Activated CD4-positive, alpha-beta T cell treated with anti-CD3 and anti-CD28 coated beads, Interleukin-2, amount 10 ng/mL, durations not matched to agents 24 days and 14 days (primary cell): ENCODE measurements at regions of chr1 and their contacts with region 1.

Region 1: DNA sequence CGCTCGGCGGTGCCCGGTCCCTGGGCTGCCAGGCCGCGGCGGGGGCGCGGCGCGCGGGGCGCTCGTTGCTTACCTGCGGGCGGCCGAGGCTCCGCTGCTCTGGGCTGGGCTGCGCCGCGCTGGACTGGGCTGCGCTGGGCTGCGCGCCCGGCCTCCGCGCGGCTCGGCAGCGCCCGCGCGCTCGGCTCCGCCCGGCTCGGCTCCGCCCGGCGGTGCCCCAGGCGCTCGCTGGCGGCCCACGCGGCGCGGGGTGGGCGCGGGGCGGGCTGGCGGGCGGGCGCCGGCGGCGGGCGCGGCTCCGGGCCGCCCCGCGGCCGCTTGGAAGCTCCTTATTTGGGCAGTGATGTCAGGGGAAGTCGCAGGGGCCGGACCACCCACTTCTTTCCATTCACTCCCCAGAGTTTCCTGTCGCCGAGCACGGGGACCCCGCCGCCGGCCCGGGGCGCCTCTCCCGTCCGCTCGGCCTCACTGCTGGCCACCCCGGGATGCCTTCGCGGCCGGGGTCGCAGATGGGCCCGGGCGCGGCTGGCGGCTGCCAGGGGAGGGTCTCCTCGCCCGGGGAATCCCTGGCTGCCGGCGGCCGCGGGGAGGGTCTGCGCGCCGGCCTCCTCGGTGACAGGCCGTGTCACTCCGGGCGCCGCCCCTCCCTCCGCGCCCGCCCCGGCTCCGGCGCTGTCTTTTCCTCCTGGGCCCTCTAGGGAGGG is 177.7 kb upstream of the EDN2 start:
- DNase-seq: peak; percentile 93
- H3K4me3 Mint-ChIP-seq: peak overlapping the region; percentile 71
- H3K27ac Mint-ChIP-seq: peak overlapping the region; percentile 74
- H3K4me1 Mint-ChIP-seq: peaks cover 66% of the 10 kb centered on the region
- H3K27me3 Mint-ChIP-seq: no peaks in the 10 kb centered on the region

Region 2: GRCh38 chr1:40997096-40997495 is 665.1 kb before region 1 on chr1:
- intact Hi-C with region 1: no loop called
- DNase-seq: no peak
- H3K4me3 Mint-ChIP-seq: no peak overlapping the region
- H3K27ac Mint-ChIP-seq: no peak overlapping the region
- H3K4me1 Mint-ChIP-seq: peaks cover 13% of the 10 kb centered on the region
- H3K27me3 Mint-ChIP-seq: no peaks in the 10 kb centered on the region

Region 3: DNA sequence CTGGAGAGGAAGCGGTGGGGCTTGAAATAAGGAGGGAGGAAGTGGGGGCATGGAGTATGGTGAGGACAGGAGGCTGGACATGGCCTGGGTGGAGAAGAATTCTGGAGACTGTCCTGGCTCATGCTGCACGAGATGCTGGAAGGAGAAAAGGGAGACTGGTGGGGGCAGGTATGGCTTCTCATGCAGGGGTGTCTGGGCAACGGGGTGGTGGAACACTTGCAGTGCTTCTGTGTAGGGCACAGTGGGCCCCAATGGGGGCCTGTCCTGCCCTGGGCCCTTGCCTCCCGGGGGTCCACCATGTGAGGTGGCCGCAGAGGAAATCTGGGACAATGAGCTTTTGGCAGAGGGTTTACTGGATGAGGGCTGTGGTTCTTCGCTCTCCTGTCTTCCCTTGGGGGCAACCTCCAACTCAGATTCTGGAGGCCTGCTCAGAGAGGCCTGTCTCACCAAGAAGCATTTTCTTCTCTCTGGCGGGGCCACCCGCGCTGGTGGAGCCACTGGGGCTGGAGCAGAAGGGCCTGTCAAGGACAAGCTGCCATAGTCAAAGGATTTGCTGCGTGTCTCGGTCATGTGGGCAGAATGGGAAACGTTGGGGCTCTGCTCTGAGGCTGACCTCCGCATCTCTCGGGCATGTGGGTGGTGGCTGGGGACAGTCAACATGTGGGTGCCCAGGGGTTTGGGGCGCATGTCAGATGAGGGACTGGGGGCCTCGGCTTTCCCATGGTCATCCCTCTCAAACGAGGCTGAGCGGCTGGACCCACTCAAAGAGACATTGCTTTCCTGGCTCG is 80.8 kb before region 1 on chr1:
- intact Hi-C with region 1: no loop called
- DNase-seq: no peak
- H3K4me3 Mint-ChIP-seq: no peak overlapping the region
- H3K27ac Mint-ChIP-seq: peak overlapping the region; percentile 29
- H3K4me1 Mint-ChIP-seq: peaks cover 37% of the 10 kb centered on the region
- H3K27me3 Mint-ChIP-seq: no peaks in the 10 kb centered on the region

Region 4: GRCh38 chr1:41626616-41627375 is 35.4 kb before region 1 on chr1:
- intact Hi-C with region 1: loop called (anchors 5 kb)
- DNase-seq: no peak
- H3K4me3 Mint-ChIP-seq: no peak overlapping the region
- H3K27ac Mint-ChIP-seq: peak overlapping the region; percentile 66
- H3K4me1 Mint-ChIP-seq: peaks cover 59% of the 10 kb centered on the region
- H3K27me3 Mint-ChIP-seq: no peaks in the 10 kb centered on the region

Region 5: GRCh38 chr1:42035830-42036604 is 373.8 kb after region 1 on chr1:
- intact Hi-C with region 1: loop called (anchors 5 kb)
- DNase-seq: peak; percentile 99
- H3K4me3 Mint-ChIP-seq: peak overlapping the region; percentile 82
- H3K27ac Mint-ChIP-seq: peak overlapping the region; percentile 31
- H3K4me1 Mint-ChIP-seq: peaks cover 27% of the 10 kb centered on the region
- H3K27me3 Mint-ChIP-seq: peaks cover 10% of the 10 kb centered on the region